Activated naive CD4-positive, alpha-beta T cell treated with anti-CD3 and anti-CD28 coated beads, Interleukin-2, amount 10 ng/mL, durations not matched to agents 7 days and 5 days (primary cell): ENCODE measurements at regions of chr1 and their contacts with region 1.

Region 1: GRCh38 chr1:43934101-43934985 is 742 bp downstream of the ARTN start:
- DNase-seq: peak; percentile 70
- H3K4me3 Mint-ChIP-seq: no peak overlapping the region
- H3K27ac Mint-ChIP-seq: no peak overlapping the region
- H3K4me1 Mint-ChIP-seq: peaks cover 14% of the 10 kb centered on the region
- H3K27me3 Mint-ChIP-seq: peaks cover 55% of the 10 kb centered on the region

Region 2: DNA sequence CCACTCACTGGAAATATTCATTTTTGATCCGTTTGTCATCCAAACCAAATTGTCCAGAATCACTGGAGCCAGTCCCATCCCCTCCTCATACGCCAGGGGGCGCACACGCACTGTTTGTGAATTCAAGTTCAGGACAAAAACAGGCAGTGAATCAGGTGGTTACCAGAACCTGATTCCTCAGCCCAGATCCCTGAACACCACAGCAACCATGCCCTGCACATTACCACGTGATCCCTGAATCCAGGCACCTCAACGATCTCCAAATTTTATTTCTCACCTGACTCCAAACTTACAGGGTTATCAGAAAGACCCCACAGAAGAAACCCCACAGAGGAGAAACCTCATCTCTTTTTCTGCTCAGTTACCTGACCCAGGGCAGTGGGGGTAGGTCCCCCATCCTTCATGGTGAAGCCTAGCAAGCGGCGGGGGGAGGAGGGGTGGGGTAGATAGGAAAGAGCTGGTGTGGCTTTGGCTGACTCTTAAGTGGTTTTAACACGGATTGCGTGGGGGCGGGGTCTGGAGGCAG is 405.1 kb before region 1 on chr1:
- CTCF ChIA-PET with region 1: interaction called, 24 read pairs
- DNase-seq: peak; percentile 84
- H3K4me3 Mint-ChIP-seq: no peak overlapping the region
- H3K27ac Mint-ChIP-seq: no peak overlapping the region
- H3K4me1 Mint-ChIP-seq: peaks cover 16% of the 10 kb centered on the region
- H3K27me3 Mint-ChIP-seq: peaks cover 83% of the 10 kb centered on the region

Region 3: GRCh38 chr1:43763497-43763973 is 170.8 kb before region 1 on chr1:
- CTCF ChIA-PET with region 1: interaction called, 452 read pairs
- DNase-seq: peak; percentile 67
- H3K4me3 Mint-ChIP-seq: no peak overlapping the region
- H3K27ac Mint-ChIP-seq: no peak overlapping the region
- H3K4me1 Mint-ChIP-seq: no peaks in the 10 kb centered on the region
- H3K27me3 Mint-ChIP-seq: no peaks in the 10 kb centered on the region

Region 4: DNA sequence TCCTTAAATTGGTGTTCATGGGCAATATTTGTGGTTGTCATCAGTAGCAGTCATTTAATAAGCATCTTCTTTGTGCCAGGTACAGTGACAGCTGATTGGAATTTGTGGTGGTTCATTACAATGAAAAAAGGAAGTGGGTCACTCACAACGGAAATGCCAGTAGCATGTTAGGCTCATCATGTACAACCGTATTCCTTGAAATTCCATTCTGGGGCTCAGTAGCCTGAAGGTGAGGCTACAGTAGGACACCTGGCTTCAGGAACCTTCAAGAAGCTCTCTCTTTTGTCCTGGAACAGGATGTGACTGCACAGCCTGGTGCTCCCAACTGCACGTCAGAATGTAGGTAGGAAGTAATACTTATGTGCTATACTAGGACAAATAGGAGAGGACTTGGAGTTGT is 133.1 kb before region 1 on chr1:
- CTCF ChIA-PET with region 1: no interaction called
- DNase-seq: no peak
- H3K4me3 Mint-ChIP-seq: no peak overlapping the region
- H3K27ac Mint-ChIP-seq: no peak overlapping the region
- H3K4me1 Mint-ChIP-seq: peaks cover 7% of the 10 kb centered on the region
- H3K27me3 Mint-ChIP-seq: no peaks in the 10 kb centered on the region

Region 5: GRCh38 chr1:43946236-43947060 is 12.1 kb after region 1 on chr1 and contains the start of gene IPO13:
- CTCF ChIA-PET with region 1: interaction called, 105 read pairs
- DNase-seq: peak; percentile 96
- H3K4me3 Mint-ChIP-seq: peak within 1 kb of the TSS; percentile 92
- H3K27ac Mint-ChIP-seq: peak within 1 kb of the TSS; percentile 91
- H3K4me1 Mint-ChIP-seq: peaks cover 48% of the 10 kb centered on the region
- H3K27me3 Mint-ChIP-seq: no peaks in the 10 kb centered on the region

Region 6: GRCh38 chr1:43974443-43975248 is 40.3 kb after region 1 on chr1 and contains the start of gene ATP6V0B:
- CTCF ChIA-PET with region 1: interaction called, 15 read pairs
- DNase-seq: peak; percentile 97
- H3K4me3 Mint-ChIP-seq: peak within 1 kb of the TSS; percentile 75
- H3K27ac Mint-ChIP-seq: peak within 1 kb of the TSS; percentile 91
- H3K4me1 Mint-ChIP-seq: peaks cover 63% of the 10 kb centered on the region
- H3K27me3 Mint-ChIP-seq: peaks cover 5% of the 10 kb centered on the region